ENCODE measurements at regions of chr16 and their contacts with region 1.

Region 1: DNA sequence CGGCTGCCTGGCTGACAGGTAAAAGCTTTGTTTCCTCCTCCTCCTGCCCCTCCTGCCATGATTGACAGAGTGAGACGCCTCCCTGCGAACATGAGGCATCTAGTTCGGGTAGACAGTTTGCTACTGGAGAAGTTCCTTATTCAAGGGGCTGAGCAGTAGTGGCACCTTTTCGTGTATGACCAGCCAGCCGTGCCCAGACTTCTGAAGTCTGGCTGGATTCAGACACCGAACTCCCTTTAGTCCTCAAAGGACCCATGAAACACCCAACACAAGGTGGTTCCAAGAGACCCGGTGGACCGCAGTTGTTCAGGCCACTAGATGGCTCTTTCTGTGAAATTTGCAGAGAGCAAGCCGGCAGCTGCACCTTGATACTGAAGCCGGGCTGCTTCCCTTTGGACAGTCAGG is 192.8 kb downstream of the XYLT1 start:
- DNase-seq: peak; percentile 54
- H3K4me3 Mint-ChIP-seq: no peak overlapping the region
- H3K27ac Mint-ChIP-seq: no peak overlapping the region
- H3K4me1 Mint-ChIP-seq: peaks cover 50% of the 10 kb centered on the region
- H3K27me3 Mint-ChIP-seq: no peaks in the 10 kb centered on the region
- CTCF ChIP-seq: peak; percentile 57

Region 2: GRCh38 chr16:17211797-17212196 is 66.2 kb before region 1 on chr16:
- CTCF ChIA-PET with region 1: no interaction called
- intact Hi-C with region 1: loop called (anchors 5 kb)
- DNase-seq: peak; percentile 58
- H3K4me3 Mint-ChIP-seq: no peak overlapping the region
- H3K27ac Mint-ChIP-seq: no peak overlapping the region
- H3K4me1 Mint-ChIP-seq: no peaks in the 10 kb centered on the region
- H3K27me3 Mint-ChIP-seq: no peaks in the 10 kb centered on the region
- CTCF ChIP-seq: peak; percentile 68

Region 3: GRCh38 chr16:17301593-17302135 is 23.7 kb after region 1 on chr16:
- CTCF ChIA-PET with region 1: interaction called, 3 read pairs
- intact Hi-C with region 1: loop called (anchors 1 kb)
- DNase-seq: no peak
- H3K4me3 Mint-ChIP-seq: no peak overlapping the region
- H3K27ac Mint-ChIP-seq: no peak overlapping the region
- H3K4me1 Mint-ChIP-seq: peaks cover 51% of the 10 kb centered on the region
- H3K27me3 Mint-ChIP-seq: no peaks in the 10 kb centered on the region
- CTCF ChIP-seq: no peak

Region 4: DNA sequence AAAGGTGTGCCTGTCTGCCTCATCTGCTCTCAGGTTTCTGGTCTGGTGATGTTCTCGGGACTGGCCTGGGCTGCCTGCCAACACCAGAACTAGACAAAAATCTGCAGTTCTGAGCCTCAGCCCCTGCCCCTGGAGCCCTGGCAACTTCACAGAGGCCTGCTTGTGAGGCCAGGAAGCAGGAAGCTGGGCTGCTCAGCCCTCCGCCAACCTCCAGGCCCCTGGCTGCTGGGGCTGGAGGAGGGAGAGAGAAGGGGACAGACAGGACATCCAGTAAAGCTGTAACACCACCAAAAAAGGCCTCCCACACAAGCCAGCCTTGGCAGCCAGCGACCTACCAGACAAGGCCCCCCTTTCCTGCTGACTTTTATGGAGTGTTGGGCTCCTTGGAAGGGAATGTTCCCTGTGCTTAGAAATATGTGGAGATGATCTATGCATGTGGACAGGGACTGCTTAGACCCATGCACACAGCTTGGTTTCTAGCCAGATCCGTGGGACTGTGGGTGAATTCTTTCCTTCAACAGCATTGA is 35.2 kb after region 1 on chr16:
- CTCF ChIA-PET with region 1: interaction called, 5 read pairs
- intact Hi-C with region 1: loop called (anchors 2 kb)
- DNase-seq: peak; percentile 54
- H3K4me3 Mint-ChIP-seq: no peak overlapping the region
- H3K27ac Mint-ChIP-seq: no peak overlapping the region
- H3K4me1 Mint-ChIP-seq: peaks cover 20% of the 10 kb centered on the region
- H3K27me3 Mint-ChIP-seq: no peaks in the 10 kb centered on the region
- CTCF ChIP-seq: no peak

Region 5: DNA sequence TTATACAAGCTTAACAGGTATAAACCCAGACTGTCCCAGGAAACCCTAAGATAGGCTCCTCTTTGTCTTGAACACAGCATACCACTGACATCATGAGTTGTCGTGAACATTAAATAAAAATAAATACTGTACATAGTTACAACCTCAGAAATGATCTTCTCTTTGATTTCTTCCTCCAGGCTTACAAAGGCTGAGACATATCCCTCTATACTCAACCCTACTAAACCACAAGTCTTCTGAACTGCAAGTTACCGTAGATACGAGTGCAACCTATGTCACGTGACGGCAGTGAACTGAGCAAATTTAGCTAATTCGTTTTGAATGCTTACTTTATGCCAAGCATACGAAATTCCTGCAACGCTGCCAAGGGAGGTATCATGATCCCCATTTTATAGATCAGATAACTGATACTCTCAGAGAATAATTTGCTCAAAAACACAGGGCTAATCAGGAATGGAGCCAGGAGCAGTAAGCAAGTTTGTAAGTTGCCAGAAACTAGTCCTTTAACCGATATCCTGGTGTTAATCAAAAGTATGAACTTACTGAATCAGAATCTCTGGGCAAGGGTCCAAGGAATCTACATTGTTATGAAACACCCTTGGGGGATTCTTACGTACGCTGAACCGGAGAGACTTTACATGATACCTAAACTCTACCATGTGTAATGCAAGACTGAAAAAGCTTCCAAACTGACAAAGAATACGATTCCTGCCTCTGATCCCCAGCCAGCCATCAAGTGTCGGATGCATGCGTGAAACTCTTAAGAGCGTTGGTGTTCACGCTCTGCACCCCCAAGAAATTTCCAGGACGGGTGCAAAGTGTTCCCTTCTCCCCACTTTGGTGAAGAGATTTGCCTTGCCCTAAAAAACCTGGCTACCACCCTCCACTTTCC is 86.6 kb after region 1 on chr16:
- CTCF ChIA-PET with region 1: interaction called, 6 read pairs
- intact Hi-C with region 1: loop called (anchors 2 kb)
- DNase-seq: peak; percentile 41
- H3K4me3 Mint-ChIP-seq: peak overlapping the region; percentile 37
- H3K27ac Mint-ChIP-seq: peak overlapping the region; percentile 89
- H3K4me1 Mint-ChIP-seq: peaks cover 20% of the 10 kb centered on the region
- H3K27me3 Mint-ChIP-seq: no peaks in the 10 kb centered on the region
- CTCF ChIP-seq: no peak

Region 6: DNA sequence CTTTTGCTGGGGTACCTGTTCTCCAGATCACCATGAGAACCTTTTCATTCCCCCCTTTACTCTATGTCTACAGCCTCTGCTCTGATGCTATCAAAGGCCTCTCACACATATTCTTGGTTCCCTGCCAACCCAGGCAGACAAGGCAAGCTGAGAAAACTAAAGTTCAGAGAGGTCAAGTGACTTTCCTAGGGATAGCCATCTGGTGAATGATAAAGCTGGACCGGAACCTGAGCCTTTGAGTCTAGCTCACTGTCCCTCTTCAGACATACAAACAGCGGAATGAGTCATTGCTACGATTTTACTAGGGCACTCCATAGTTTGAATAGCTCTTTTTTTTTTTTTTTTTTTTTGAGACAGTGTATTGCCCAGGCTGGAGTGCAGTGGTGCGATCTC is 119.5 kb after region 1 on chr16:
- CTCF ChIA-PET with region 1: interaction called, 7 read pairs
- intact Hi-C with region 1: loop called (anchors 1 kb)
- DNase-seq: peak; percentile 35
- H3K4me3 Mint-ChIP-seq: no peak overlapping the region
- H3K27ac Mint-ChIP-seq: peak overlapping the region; percentile 69
- H3K4me1 Mint-ChIP-seq: peaks cover 27% of the 10 kb centered on the region
- H3K27me3 Mint-ChIP-seq: no peaks in the 10 kb centered on the region
- CTCF ChIP-seq: no peak

Region 7: DNA sequence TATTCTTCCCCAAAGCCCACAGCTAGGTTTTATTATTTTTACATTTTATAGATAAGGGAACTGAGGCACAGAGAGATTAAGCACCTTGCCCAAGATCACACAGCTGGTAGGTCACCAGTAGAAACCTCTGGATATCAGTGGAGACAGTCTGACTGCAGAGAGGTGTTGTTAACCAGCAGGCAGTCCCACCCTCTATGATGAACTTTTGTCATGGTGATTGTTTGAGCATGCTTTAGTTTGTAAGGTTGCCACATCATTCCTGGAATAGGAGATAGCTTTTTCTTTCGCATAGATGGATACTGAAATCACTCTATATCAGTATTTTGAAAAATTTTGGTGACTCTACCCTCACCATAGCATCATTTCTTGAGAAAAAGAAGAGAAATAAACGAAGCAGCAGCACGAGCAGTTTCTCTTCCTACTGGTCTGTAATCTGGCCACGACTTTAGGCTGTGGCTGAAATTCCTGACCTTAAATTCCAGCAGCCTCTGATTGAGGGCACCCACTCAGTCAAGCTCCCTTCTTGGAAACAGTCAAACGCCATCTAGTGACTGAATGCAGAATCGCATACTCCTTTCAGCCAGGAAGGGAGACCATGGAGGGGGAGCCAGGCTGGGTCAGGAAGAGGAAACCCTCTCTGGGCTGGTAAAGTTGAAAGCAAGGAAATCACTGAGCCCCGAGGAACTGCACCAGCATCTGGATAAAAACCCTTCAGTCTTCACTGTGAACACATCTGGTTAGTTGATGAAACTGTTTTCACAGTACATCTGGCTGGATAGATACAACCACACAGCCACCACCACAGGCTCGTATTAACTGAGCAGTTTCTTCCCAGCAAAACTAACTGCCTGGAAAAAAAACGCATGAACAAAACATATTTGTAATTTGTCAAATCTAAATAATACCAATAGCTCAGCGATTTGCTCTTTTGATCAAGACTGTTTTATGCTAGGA is 301.2 kb after region 1 on chr16:
- CTCF ChIA-PET with region 1: no interaction called
- intact Hi-C with region 1: loop called (anchors 5 kb)
- DNase-seq: peak; percentile 82
- H3K4me3 Mint-ChIP-seq: no peak overlapping the region
- H3K27ac Mint-ChIP-seq: no peak overlapping the region
- H3K4me1 Mint-ChIP-seq: peaks cover 12% of the 10 kb centered on the region
- H3K27me3 Mint-ChIP-seq: peaks cover 13% of the 10 kb centered on the region
- CTCF ChIP-seq: peak; percentile 84

Region 8: DNA sequence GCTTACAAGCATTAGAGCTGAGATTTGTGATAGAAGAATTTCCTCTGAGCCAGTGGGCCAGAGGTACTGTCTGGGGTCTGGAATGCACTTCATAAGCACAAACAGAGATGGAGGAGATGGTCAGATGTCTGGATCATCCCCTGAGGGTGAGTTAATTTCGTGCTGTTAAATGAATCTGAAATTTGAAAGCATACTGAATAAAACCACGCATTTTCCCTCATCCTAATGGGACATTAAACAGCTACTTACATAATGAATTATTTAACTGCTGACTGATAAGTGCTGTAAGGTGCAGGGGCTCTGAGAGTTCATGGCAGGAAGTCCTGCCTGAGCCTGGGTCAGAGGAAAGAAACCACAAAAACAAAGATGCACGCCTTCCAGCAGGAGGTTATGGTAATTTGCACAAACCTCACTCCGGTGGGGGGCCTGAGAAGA is 329.1 kb after region 1 on chr16:
- CTCF ChIA-PET with region 1: no interaction called
- intact Hi-C with region 1: no loop called
- DNase-seq: no peak
- H3K4me3 Mint-ChIP-seq: no peak overlapping the region
- H3K27ac Mint-ChIP-seq: no peak overlapping the region
- H3K4me1 Mint-ChIP-seq: no peaks in the 10 kb centered on the region
- H3K27me3 Mint-ChIP-seq: no peaks in the 10 kb centered on the region
- CTCF ChIP-seq: no peak